Activated CD8-positive, alpha-beta T cell treated with anti-CD3 and anti-CD28 coated beads, Interleukin-2, amount 10 ng/mL, durations not matched to agents 7 days and 5 days (primary cell): ENCODE measurements at regions of chr16 and their contacts with region 1.

Region 1: DNA sequence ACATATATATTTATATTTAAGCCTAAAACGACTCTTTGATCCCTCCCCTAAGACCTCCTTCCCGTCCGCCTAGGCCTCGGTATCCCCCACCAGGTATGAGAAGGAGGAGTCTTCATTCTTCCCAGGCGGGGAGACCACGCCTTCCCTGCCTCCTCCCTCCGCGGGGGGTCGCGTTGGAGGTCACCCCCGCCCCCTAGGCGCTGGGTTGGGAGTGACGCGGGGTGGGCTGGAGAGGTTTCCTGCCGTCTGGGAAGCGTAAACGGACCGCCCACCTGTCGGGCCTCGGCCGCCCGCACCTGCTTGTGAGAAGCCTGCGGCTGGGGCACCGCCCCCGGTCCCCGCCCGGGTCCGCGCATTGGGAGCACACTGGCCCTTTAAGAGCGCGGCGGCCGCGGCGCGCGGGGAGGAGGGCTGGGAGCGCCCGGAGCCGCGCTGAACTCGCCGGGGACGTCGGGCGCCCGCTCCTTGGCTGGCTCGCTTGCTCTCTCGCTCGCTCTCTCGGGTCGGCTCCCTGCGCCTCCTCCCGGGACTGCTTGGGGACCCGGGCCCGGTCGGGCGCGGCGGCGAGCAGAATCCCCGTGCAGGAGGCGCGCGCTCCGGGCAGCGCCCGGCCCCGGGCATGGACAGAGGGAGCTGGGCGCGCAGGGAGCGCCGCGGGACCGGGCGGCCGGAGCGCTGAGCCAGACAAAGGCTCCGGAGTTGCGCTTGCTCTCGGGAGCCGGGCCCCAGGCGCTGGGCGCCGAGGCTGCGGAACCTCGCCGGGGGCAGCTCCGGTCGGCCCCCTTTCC is at the start of gene MMP15:
- DNase-seq: peak; percentile 66
- ATAC-seq: peak; percentile 77
- H3K4me3 Mint-ChIP-seq: peak within 1 kb of the TSS; percentile 81
- H3K27ac Mint-ChIP-seq: peak within 1 kb of the TSS; percentile 72
- H3K4me1 Mint-ChIP-seq: peaks cover 13% of the 10 kb centered on the region
- H3K27me3 Mint-ChIP-seq: peaks cover 14% of the 10 kb centered on the region
- total RNA-seq, gene MMP15: 0.50 to 0.61 TPM

Region 2: DNA sequence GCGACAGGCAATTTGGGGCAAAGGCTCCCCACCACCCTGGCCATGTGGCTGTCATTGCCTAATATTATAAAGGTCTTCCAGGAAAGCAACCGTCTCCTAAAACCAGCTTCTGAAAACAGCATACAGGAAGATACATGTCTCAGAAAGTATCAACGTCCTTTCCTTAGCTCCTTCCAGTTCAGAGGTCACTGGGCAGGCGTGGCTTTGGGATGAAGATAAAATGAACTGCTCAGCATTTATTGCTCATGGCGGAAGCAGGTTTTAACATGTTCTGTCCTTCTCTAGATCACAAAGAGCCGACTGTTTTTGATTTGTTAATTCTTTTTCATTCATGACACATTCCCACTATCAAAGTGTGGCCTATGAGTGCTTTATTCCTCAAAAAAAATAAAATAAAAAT is 95.6 kb after region 1 on chr16:
- CTCF ChIA-PET with region 1: interaction called, 14 read pairs
- POLR2A ChIA-PET with region 1: no interaction called
- DNase-seq: no peak
- ATAC-seq: no peak
- H3K4me3 Mint-ChIP-seq: no peak overlapping the region
- H3K27ac Mint-ChIP-seq: no peak overlapping the region
- H3K4me1 Mint-ChIP-seq: peaks cover 33% of the 10 kb centered on the region
- H3K27me3 Mint-ChIP-seq: no peaks in the 10 kb centered on the region

Region 3: DNA sequence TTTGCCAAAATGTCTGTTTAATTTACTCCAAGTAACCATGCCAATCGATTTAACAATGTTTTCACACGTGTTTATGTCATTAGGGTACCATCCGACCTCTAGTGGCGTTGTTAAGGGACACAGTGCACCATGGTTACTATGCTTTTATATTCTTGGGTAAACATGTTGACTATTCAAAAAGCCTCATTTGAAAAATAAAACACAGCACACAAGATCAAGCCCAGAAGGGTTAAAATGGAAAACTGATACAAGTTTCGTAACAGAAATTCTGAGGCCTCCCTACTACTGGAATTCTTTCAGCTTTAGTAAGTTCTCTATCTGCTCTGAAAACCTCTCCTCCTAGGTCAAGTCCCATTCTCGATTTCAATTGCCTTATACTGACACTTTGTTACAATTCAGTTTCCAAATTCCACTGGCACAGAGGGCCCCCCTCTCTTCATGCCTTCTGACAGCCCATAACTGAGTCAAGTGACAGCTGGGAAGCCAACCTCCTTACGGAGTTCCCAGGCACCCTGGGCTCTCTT is 101.5 kb after region 1 on chr16:
- CTCF ChIA-PET with region 1: interaction called, 14 read pairs
- POLR2A ChIA-PET with region 1: interaction called, 3 read pairs
- DNase-seq: peak; percentile 62
- ATAC-seq: peak; percentile 24
- H3K4me3 Mint-ChIP-seq: peak overlapping the region; percentile 86
- H3K27ac Mint-ChIP-seq: peak overlapping the region; percentile 56
- H3K4me1 Mint-ChIP-seq: peaks cover 51% of the 10 kb centered on the region
- H3K27me3 Mint-ChIP-seq: no peaks in the 10 kb centered on the region

Region 4: DNA sequence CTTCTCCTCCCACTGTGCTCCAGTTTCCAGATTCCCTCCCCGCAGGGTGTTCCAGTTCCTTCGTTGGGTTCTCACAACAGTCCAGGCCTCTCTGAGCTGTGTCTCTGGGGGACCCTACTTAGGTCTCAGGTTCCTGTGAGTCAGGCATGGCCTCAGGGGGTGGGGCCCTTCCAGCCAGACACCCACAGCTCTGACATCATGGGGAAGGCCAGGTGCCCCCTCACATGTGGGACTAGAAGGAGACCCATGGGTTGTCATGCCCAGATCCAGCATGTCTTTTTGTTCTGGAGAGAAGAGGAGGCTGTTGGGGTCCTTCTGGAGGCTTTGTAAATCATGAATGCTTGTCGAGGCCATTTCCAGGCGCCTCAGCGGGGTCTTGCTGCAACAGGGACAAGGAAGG is 442.4 kb after region 1 on chr16:
- CTCF ChIA-PET with region 1: no interaction called
- POLR2A ChIA-PET with region 1: no interaction called
- DNase-seq: no peak
- ATAC-seq: no peak
- H3K4me3 Mint-ChIP-seq: no peak overlapping the region
- H3K27ac Mint-ChIP-seq: no peak overlapping the region
- H3K4me1 Mint-ChIP-seq: peaks cover 3% of the 10 kb centered on the region
- H3K27me3 Mint-ChIP-seq: peaks cover 35% of the 10 kb centered on the region